CD14-positive monocyte (primary cell): ENCODE measurements at regions of chr14 and their contacts with region 1.

Region 1: DNA sequence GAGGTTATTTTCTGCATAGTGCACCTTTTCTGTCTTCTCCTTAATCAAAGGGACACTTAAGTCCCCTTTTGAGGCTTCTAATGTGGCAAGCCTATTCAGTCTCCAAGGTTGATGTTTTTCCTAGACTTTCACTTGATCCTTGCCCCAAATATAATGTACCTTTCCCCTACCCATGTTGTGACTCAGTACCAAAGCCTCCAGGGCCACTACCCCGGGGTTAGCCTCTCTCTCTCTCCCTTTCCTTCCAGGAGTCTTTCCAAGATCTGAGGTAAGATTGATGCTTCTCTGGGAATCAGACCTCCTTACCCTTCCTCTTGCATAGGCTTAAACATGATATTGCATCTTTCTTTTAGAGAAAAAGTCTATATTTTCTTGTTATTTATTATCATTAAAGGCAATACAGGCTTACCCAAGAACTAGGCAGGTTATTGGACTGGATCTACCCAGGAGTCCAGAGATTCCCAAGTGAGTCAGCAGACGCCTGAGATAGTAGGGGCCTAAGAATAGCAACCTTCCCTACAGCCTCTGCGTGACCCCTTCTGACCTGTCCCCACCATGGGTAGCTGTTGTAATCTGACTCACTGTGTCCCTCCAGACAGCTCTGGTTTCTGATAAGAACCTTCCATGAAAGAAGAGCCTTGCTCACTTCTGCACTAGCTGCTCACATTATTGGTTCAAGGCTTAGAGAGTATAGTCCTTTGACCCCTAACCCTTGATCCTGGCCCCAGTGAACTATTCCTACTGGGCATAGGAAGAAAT is 172.9 kb downstream of the ZFP36L1 start:
- DNase-seq: no peak
- H3K4me3 ChIP-seq: no peak overlapping the region
- H3K4me3 Mint-ChIP-seq: no peak overlapping the region
- H3K27ac ChIP-seq: no peak overlapping the region
- H3K27ac Mint-ChIP-seq: peak overlapping the region in 2 of 7 donors; percentile 57 to 66
- H3K4me1 ChIP-seq: peaks cover 10 to 11% of the 10 kb centered on the region in 2 donors
- H3K4me1 Mint-ChIP-seq: peaks cover 14% of the 10 kb centered on the region
- H3K27me3 ChIP-seq: no peaks in the 10 kb centered on the region
- H3K27me3 Mint-ChIP-seq: peaks cover 0 to 4% (median 0%) of the 10 kb centered on the region in 3 donors
- CTCF ChIP-seq: no peak

Region 2: GRCh38 chr14:68583555-68584280 is 36.3 kb before region 1 on chr14:
- intact Hi-C with region 1: loop called in 1 of 2 experiments (anchors 5 kb)
- DNase-seq: no peak
- H3K4me3 ChIP-seq: no peak overlapping the region
- H3K4me3 Mint-ChIP-seq: no peak overlapping the region
- H3K27ac ChIP-seq: no peak overlapping the region
- H3K27ac Mint-ChIP-seq: no peak overlapping the region
- H3K4me1 ChIP-seq: peaks cover 21% of the 10 kb centered on the region in 2 donors
- H3K4me1 Mint-ChIP-seq: peaks cover 26% of the 10 kb centered on the region
- H3K27me3 ChIP-seq: no peaks in the 10 kb centered on the region
- H3K27me3 Mint-ChIP-seq: peaks cover 0 to 6% (median 4%) of the 10 kb centered on the region in 3 donors
- CTCF ChIP-seq: no peak